ENCODE measurements at regions of chr19 and their contacts with region 1.

Region 1: DNA sequence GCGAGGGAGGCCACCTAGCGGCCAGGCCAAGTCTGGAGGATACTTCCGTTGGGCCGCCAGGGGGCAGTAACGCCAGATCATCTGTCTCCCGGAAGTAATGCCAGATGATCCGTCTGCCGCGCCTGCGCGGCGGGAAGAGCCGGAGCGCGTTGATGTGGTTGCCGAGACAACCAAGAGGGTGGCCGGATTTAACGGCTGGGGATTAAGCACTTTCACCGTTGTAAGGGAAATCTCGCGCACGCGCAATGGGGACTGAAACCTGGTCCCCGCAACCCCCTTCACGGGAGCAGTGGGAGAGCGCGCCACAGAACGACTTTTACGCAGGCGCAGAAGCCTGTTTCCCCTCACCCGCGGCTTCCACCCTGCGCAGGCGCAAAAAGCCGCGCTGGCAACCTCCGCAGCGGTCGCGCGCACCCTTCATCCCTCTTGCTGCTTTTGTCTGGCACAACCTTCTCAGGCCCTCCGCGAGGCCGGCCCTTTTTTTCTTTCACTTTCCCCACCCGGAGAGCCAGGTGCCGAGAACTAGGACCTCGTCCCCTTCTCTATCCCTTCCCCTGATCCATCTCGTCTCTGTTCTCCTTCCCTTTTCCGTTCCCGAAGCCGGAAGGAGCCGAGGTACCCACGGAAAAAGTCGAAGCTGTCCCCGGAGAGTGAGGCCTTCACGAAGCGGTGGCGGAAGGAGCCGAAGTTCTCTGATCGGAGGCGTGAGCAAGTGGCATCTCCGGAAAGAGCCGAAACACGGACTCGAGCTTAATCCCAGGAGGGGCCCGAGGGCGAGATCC is 886 bp upstream of the U2AF2 start:
- DNase-seq: peak; percentile 99 to 100
- H3K4me3 ChIP-seq: peak overlapping the region; percentile 87
- H3K4me3 Mint-ChIP-seq: peak overlapping the region; percentile 98
- H3K27ac Mint-ChIP-seq: peak overlapping the region; percentile 98
- H3K4me1 ChIP-seq: peaks cover 6% of the 10 kb centered on the region; the same call in 1 of the 2 replicates
- H3K4me1 Mint-ChIP-seq: peaks cover 8% of the 10 kb centered on the region
- H3K27me3 ChIP-seq: no peaks in the 10 kb centered on the region
- H3K27me3 Mint-ChIP-seq: no peaks in the 10 kb centered on the region
- CTCF ChIP-seq: peak; percentile 100

Region 2: GRCh38 chr19:54173951-54174834 is 1479.8 kb before region 1 on chr19:
- CTCF ChIA-PET with region 1: interaction called, 10 read pairs
- POLR2A ChIA-PET with region 1: no interaction called
- intact Hi-C with region 1: no loop called
- DNase-seq: no peak
- H3K4me3 ChIP-seq: no peak overlapping the region
- H3K4me3 Mint-ChIP-seq: peak overlapping the region; percentile 54
- H3K27ac Mint-ChIP-seq: peak overlapping the region; percentile 73
- H3K4me1 ChIP-seq: peaks cover 10% of the 10 kb centered on the region
- H3K4me1 Mint-ChIP-seq: peaks cover 21% of the 10 kb centered on the region
- H3K27me3 ChIP-seq: no peaks in the 10 kb centered on the region
- H3K27me3 Mint-ChIP-seq: no peaks in the 10 kb centered on the region
- CTCF ChIP-seq: no peak

Region 3: GRCh38 chr19:55407800-55408532 is 246.0 kb before region 1 on chr19:
- CTCF ChIA-PET with region 1: no interaction called
- POLR2A ChIA-PET with region 1: no interaction called
- intact Hi-C with region 1: no loop called
- DNase-seq: peak; percentile 99
- H3K4me3 ChIP-seq: peak overlapping the region; percentile 94
- H3K4me3 Mint-ChIP-seq: peak overlapping the region; percentile 93
- H3K27ac Mint-ChIP-seq: peak overlapping the region; percentile 99
- H3K4me1 ChIP-seq: peaks cover 18% of the 10 kb centered on the region
- H3K4me1 Mint-ChIP-seq: peaks cover 14% of the 10 kb centered on the region
- H3K27me3 ChIP-seq: no peaks in the 10 kb centered on the region
- H3K27me3 Mint-ChIP-seq: peaks cover 6% of the 10 kb centered on the region
- CTCF ChIP-seq: no peak

Region 4: GRCh38 chr19:55599468-55600279 is 54.3 kb before region 1 on chr19 and contains the start of gene FIZ1:
- CTCF ChIA-PET with region 1: interaction called, 4 read pairs
- POLR2A ChIA-PET with region 1: interaction called, 16 read pairs
- intact Hi-C with region 1: no loop called
- DNase-seq: peak; percentile 99
- H3K4me3 ChIP-seq: peak within 1 kb of the TSS; percentile 70
- H3K4me3 Mint-ChIP-seq: peak within 1 kb of the TSS; percentile 87
- H3K27ac Mint-ChIP-seq: peak within 1 kb of the TSS; percentile 98
- H3K4me1 ChIP-seq: peaks cover 5% of the 10 kb centered on the region
- H3K4me1 Mint-ChIP-seq: peaks cover 14% of the 10 kb centered on the region
- H3K27me3 ChIP-seq: no peaks in the 10 kb centered on the region
- H3K27me3 Mint-ChIP-seq: no peaks in the 10 kb centered on the region
- CTCF ChIP-seq: no peak
- total RNA-seq, gene FIZ1: 27.2 and 27.7 TPM in 2 replicates

Region 5: DNA sequence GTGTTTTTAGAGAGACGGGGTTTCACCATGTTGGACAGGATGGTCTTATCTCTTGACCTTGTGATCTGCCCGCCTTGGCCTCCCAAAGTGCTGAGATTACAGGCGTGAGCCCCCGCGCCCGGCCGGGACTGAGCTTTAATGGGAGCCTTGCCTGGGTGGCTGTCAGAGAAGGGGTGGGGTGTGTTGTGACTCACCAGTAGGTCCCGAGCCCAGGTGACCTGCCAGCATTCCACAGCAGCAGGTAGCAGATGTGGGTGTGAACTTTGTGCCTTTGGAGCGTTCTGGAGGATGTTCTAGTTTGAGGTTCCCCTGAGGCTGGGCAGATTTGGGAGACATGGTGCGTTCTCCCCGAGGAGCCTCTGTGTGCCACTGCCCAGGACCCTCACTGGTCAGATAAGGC is 14.0 kb after region 1 on chr19:
- CTCF ChIA-PET with region 1: interaction called, 53 read pairs
- POLR2A ChIA-PET with region 1: interaction called, 15 read pairs
- intact Hi-C with region 1: no loop called
- DNase-seq: peak; percentile 90 to 93
- H3K4me3 ChIP-seq: no peak overlapping the region
- H3K4me3 Mint-ChIP-seq: peak overlapping the region; percentile 69
- H3K27ac Mint-ChIP-seq: peak overlapping the region; percentile 91
- H3K4me1 ChIP-seq: peaks cover 38% of the 10 kb centered on the region
- H3K4me1 Mint-ChIP-seq: peaks cover 34% of the 10 kb centered on the region
- H3K27me3 ChIP-seq: no peaks in the 10 kb centered on the region
- H3K27me3 Mint-ChIP-seq: no peaks in the 10 kb centered on the region
- CTCF ChIP-seq: no peak

Region 6: GRCh38 chr19:55683449-55684261 is 29.7 kb after region 1 on chr19:
- CTCF ChIA-PET with region 1: interaction called, 6 read pairs
- POLR2A ChIA-PET with region 1: interaction called, 17 read pairs
- intact Hi-C with region 1: no loop called
- DNase-seq: peak; percentile 69 to 79
- H3K4me3 ChIP-seq: peak overlapping the region; percentile 5; the same call in 1 of the 2 replicates
- H3K4me3 Mint-ChIP-seq: peak overlapping the region; percentile 71
- H3K27ac Mint-ChIP-seq: peak overlapping the region; percentile 94
- H3K4me1 ChIP-seq: peaks cover 49% of the 10 kb centered on the region
- H3K4me1 Mint-ChIP-seq: peaks cover 39% of the 10 kb centered on the region
- H3K27me3 ChIP-seq: no peaks in the 10 kb centered on the region
- H3K27me3 Mint-ChIP-seq: no peaks in the 10 kb centered on the region
- CTCF ChIP-seq: no peak

Region 7: GRCh38 chr19:55830656-55831055 is 176.7 kb after region 1 on chr19:
- CTCF ChIA-PET with region 1: no interaction called
- POLR2A ChIA-PET with region 1: no interaction called
- intact Hi-C with region 1: no loop called
- DNase-seq: peak in 1 of 2 experiments; percentile 9
- H3K4me3 ChIP-seq: no peak overlapping the region
- H3K4me3 Mint-ChIP-seq: no peak overlapping the region
- H3K27ac Mint-ChIP-seq: no peak overlapping the region
- H3K4me1 ChIP-seq: no peaks in the 10 kb centered on the region
- H3K4me1 Mint-ChIP-seq: no peaks in the 10 kb centered on the region
- H3K27me3 ChIP-seq: no peaks in the 10 kb centered on the region
- H3K27me3 Mint-ChIP-seq: peaks cover 11% of the 10 kb centered on the region
- CTCF ChIP-seq: no peak